ENCODE measurements at regions of chr1 and their contacts with region 1.

Region 1: DNA sequence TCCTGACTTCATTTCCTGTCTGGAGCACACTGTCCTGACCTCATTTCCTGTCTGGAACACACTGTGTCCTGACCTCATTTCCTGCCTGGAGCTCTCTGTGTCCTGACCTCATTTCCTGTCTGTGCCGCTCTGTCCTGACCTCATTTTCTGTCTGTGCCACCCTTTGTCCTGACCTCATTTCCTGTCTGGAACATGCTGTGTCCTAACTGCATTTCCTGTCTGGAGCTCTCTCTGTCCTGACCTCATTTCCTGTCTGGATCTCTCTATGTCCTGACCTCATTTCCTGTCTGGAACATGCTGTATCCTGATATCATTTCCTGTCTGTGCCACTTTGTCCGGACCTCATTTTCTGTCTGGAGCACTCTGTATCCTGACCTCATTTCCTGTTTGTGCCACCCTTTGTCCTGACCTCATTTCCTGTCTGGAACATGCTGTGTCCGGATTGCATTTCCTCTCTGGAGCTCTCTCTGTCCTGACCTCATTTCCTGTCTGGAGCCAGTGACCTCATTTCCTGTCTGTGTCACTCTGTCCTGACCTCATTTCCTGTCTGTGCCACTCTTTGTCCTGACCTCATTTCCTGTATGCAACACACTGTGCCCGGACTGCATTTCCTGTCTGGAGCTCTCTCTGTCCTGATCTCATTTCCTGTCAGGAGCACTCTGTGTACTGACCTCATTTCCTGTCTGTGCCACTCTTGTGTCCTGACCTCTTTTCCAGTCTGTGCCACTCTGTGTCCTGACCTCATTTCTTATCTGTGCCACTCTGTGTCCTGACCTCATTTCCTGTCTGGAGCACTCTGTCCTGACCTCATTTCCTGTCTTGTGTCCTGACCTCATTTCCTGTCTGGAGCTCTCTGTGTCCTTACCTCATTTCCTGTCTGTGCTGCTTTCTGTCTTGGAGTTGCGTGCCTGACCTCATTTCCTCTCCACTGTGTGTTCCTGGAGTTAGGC is 27.6 kb downstream of the SKI start:
- DNase-seq: peak; percentile 93
- ATAC-seq: peak; percentile 72
- H3K4me3 Mint-ChIP-seq: no peak overlapping the region
- H3K27ac Mint-ChIP-seq: no peak overlapping the region
- H3K4me1 Mint-ChIP-seq: peaks cover 47% of the 10 kb centered on the region
- H3K27me3 Mint-ChIP-seq: no peaks in the 10 kb centered on the region
- CTCF ChIP-seq: no peak

Region 2: DNA sequence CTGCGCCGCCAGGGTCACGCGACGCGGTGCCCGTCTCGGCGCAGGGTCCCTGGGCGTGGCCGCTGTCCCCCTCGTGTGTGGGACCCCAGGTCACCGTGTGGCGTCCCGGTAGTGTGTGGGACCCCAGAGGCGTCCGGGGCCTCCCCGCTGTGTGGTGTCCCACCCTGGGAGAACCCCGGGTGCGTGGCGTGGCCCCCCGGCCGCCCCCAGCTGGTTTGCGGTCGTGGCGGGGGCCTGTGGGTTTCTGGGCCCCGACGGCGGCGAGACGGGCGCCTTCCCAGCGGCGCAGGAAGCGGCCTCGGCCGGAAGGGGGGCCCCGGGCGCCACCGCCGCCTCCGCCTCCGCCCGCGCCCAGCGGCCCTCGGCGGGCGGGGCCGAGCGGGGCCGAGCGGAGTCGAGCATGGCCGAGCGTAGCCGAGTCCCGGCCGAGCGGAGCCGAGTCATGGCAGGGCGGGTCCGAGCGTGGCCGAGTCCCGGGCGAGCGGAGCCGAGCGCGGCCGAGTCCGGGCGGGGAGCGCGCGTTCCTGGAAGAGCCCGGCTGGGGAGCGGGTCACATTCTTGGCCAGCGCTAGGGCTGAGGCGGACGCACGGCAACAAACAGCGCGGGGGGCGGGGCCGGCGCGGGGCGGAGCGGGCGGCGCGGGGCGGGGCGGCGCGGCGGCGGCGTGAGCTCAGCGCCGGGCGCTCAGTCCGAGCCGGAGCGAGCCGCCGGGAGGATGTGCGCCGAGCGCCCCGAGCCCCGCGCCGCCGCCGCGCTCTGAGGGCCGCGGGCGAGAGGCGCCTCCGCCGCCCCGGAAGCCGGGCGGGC is 28.1 kb before region 1 on chr1:
- CTCF ChIA-PET with region 1: no interaction called
- POLR2A ChIA-PET with region 1: interaction called, 12 read pairs
- intact Hi-C with region 1: no loop called
- DNase-seq: peak; percentile 95
- ATAC-seq: peak; percentile 93
- H3K4me3 Mint-ChIP-seq: peak overlapping the region; percentile 54
- H3K27ac Mint-ChIP-seq: peak overlapping the region; percentile 57
- H3K4me1 Mint-ChIP-seq: peaks cover 12% of the 10 kb centered on the region
- H3K27me3 Mint-ChIP-seq: peaks cover 1% of the 10 kb centered on the region
- CTCF ChIP-seq: no peak

Region 3: GRCh38 chr1:2290595-2291510 is 35.2 kb after region 1 on chr1:
- CTCF ChIA-PET with region 1: interaction called, 4 read pairs
- POLR2A ChIA-PET with region 1: interaction called, 22 read pairs
- intact Hi-C with region 1: no loop called
- DNase-seq: peak; percentile 98
- ATAC-seq: peak; percentile 92
- H3K4me3 Mint-ChIP-seq: peak overlapping the region; percentile 76
- H3K27ac Mint-ChIP-seq: peak overlapping the region; percentile 95
- H3K4me1 Mint-ChIP-seq: peaks cover 78% of the 10 kb centered on the region
- H3K27me3 Mint-ChIP-seq: no peaks in the 10 kb centered on the region
- CTCF ChIP-seq: no peak

Region 4: DNA sequence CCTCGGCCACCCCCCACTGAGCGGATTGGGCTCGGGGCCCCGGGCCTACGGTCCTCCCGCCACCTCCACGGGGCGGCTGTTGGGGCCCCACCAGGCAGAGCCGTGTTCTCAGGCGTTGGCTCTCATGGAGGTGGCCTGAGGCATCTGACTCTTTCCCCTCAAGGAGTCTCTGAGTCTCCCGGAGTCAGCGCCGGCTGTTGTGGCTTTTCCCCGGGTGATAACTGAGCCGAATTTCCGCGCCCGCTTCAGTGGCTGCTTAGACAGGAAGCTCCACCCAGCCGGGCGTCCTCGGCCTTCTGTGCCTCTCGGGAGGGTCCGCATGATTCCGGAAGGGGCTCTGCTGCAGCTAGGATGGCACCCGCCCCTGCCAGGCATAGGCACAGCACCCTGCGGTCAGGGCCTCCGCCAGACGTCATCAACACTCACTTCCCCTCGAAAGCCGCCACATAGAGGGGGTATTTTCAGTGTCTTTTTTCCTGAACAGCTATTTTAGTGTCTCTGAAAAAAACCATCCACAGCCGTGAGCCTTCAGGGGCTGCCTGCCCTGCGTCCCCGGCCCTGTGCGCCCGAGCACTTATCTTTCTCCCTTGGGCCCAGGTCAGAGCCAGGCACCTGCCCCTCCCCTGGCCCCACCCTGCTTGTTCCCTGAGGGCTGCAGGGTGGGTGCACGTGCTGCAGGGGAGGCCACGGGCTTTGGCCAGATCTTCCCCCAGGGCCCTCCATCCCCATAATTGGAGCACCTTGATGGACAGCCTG is 45.3 kb after region 1 on chr1:
- CTCF ChIA-PET with region 1: no interaction called
- POLR2A ChIA-PET with region 1: interaction called, 23 read pairs
- intact Hi-C with region 1: loop called (anchors 5 kb)
- DNase-seq: peak; percentile 98
- ATAC-seq: peak; percentile 83
- H3K4me3 Mint-ChIP-seq: peak overlapping the region; percentile 81
- H3K27ac Mint-ChIP-seq: peak overlapping the region; percentile 99
- H3K4me1 Mint-ChIP-seq: peaks cover 55% of the 10 kb centered on the region
- H3K27me3 Mint-ChIP-seq: no peaks in the 10 kb centered on the region
- CTCF ChIP-seq: no peak